Esophagus squamous epithelium (tissue), 5 donors: ENCODE measurements at regions of chr15 and their contacts with region 1.

Region 1: GRCh38 chr15:64841258-64842095 is at the start of gene PLEKHO2:
- DNase-seq: peak; percentile 74
- H3K4me3 ChIP-seq: peak within 1 kb of the TSS; percentile 82 to 96 (median 84)
- H3K27ac ChIP-seq: peak within 1 kb of the TSS; percentile 90 to 98 (median 94)
- H3K4me1 ChIP-seq: peaks cover 27 to 55% (median 29%) of the 10 kb centered on the region in 3 donors
- H3K27me3 ChIP-seq: no peaks in the 10 kb centered on the region
- CTCF ChIP-seq: no peak
- POLR2A ChIP-seq: peak in 2 of 4 donors; percentile 83 to 85
- total RNA-seq, gene PLEKHO2: 5.6 to 18.3 (median 7.2) TPM

Region 2: GRCh38 chr15:64634576-64635498 is 206.6 kb before region 1 on chr15:
- intact Hi-C with region 1: no loop called
- DNase-seq: no peak
- H3K4me3 ChIP-seq: no peak overlapping the region
- H3K27ac ChIP-seq: peak overlapping the region; percentile 61 to 77 (median 68)
- H3K4me1 ChIP-seq: peaks cover 28 to 56% (median 32%) of the 10 kb centered on the region in 3 donors
- H3K27me3 ChIP-seq: no peaks in the 10 kb centered on the region
- CTCF ChIP-seq: no peak
- POLR2A ChIP-seq: no peak

Region 3: DNA sequence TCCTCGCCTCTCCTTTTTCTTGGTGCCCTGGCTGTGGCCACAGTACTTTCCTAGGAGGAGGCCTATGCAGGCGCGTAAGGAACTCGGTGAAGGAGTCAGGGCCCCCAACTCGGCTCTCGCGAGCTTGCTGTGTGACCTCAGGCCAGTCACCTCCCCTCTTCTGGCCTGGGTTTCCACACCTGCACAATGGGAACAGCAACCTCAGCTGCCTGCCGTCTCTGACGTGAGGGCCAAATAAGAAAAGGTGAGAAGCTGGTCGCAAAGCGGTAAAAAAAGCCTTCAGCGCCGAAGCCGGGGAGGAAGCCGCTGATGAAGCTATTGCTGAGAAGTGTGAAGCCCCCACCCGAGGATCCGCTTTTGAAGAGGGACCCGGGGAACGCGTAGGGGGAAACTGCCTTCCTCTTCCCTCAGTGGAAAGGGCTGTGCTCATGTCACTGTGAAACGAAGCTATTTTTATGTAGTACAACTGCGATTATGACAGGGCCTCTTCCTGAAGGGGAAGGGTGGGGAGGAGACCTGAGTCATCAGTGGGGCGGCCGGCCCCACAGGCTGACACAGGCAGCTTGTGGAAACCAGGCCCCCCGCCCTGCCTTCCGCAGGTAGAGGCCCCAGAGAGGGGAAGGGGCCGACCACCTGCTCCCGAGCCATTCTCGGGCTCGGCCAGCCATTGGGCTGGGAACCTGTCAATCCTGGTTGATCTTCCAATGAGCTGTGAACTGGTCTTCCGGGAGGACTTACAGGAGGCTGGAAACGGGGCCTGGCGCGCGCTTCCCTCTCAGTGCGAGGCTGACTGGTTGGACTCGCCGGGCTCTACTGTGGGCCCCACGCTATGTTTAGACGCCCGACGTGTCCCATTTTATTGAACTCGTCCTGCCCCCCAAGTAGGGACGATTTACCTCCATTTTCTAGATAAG is 52.3 kb after region 1 on chr15:
- intact Hi-C with region 1: loop called (anchors 10 kb)
- DNase-seq: peak; percentile 88
- H3K4me3 ChIP-seq: peak overlapping the region; percentile 17 to 60 (median 35)
- H3K27ac ChIP-seq: peak overlapping the region; percentile 88 to 97 (median 92)
- H3K4me1 ChIP-seq: peaks cover 36 to 71% (median 51%) of the 10 kb centered on the region in 3 donors
- H3K27me3 ChIP-seq: no peaks in the 10 kb centered on the region
- CTCF ChIP-seq: no peak
- POLR2A ChIP-seq: peak in 2 of 4 donors; percentile 54 to 73